Mucosa of descending colon (tissue), 3 donors: ENCODE measurements at regions of chr4 and their contacts with region 1.

Region 1: GRCh38 chr4:41281038-41281634 is 24.4 kb downstream of the UCHL1 start:
- DNase-seq: peak in 1 of 3 donors; percentile 75
- ATAC-seq: peak; percentile 92
- H3K4me3 ChIP-seq: no peak overlapping the region
- H3K4me1 ChIP-seq: no peaks in the 10 kb centered on the region
- CTCF ChIP-seq: peak; percentile 49

Region 2: GRCh38 chr4:40462326-40462725 is 818.8 kb before region 1 on chr4:
- intact Hi-C with region 1: no loop called
- DNase-seq: no peak
- ATAC-seq: peak; percentile 67
- H3K4me3 ChIP-seq: no peak overlapping the region
- H3K4me1 ChIP-seq: peaks cover 18% of the 10 kb centered on the region
- CTCF ChIP-seq: no peak

Region 3: GRCh38 chr4:41647383-41647782 is 366.2 kb after region 1 on chr4:
- intact Hi-C with region 1: loop called in 1 of 2 experiments (anchors 5 kb)
- DNase-seq: no peak
- ATAC-seq: no peak
- H3K4me3 ChIP-seq: no peak overlapping the region
- H3K4me1 ChIP-seq: no peaks in the 10 kb centered on the region
- CTCF ChIP-seq: no peak

Region 4: GRCh38 chr4:41661442-41662076 is 380.4 kb after region 1 on chr4:
- intact Hi-C with region 1: loop called (anchors 5 kb)
- DNase-seq: peak in 2 of 3 donors; percentile 58 to 68
- ATAC-seq: peak; percentile 74
- H3K4me3 ChIP-seq: no peak overlapping the region
- H3K4me1 ChIP-seq: no peaks in the 10 kb centered on the region
- CTCF ChIP-seq: peak; percentile 81

Region 5: DNA sequence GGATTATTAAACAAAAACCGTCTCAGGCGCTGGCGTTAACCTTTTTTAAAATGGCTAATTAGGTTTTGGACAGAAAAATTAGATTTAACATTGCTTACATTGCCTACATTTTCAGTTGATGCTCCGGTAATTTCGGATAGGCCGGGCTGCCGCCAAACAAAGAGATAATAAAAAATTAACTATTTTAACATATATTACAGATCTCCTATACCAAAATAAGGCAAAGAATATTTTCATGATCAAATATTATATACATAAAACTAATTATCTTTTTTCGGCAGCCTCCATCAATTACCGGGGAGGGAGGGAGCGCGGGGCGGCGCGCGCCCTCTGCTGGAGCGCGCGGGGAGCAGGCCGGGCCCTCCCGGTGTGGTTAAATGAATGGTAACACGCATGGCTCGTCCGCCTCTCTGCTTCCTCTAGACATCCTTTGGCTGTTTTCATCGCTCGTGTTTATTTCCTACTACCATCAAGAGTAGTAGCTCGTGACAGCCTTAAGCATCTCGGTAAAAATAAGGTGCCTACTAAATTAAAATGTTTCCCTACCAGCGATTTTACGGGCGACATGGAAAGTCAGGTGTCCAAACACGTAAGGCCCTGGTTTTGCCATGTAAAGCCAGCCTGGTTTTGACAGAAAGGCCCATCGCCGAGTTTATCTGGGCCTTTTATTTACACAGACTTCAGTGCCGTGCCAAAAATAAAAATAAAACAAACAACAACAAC is 601.6 kb after region 1 on chr4:
- intact Hi-C with region 1: loop called in 1 of 2 experiments (anchors 10 kb)
- DNase-seq: peak in 2 of 3 donors; percentile 54 to 59
- ATAC-seq: peak; percentile 80
- H3K4me3 ChIP-seq: no peak overlapping the region
- H3K4me1 ChIP-seq: peaks cover 7% of the 10 kb centered on the region
- CTCF ChIP-seq: peak; percentile 83